ENCODE measurements at regions of chr4 and their contacts with region 1.

Region 1: DNA sequence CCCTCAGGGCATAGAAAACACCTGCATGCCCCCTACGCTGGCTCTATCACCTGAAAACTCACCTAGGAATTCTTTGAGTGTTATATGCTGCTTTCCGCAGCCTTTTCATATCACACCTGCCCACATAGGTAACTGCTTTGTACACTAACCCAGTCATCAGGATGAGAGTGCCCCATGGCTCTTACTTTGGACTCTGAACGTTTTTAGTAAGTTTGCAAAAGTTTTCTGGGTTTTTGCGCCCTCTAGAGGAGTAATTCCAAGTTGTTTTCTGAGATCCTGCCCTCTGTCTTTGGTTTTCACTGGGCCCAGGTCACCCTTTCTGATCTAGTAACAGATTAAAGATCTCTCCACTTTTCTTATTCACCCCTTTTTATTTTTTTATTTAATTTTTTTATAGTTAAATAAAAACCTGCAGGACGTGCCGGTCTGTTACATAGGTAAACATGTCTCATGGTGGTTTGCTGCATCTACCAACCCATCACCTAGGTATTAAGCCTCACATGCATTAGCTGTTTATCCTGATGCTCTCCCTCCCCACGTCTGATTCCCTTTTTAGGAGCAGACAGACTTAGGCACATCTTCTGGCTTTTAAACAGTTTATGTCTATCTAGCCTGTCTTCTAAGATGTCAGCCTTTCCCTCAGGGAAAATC is 139.2 kb downstream of the NWD2 start:
- DNase-seq: peak; percentile 27
- H3K4me3 Mint-ChIP-seq: no peak overlapping the region
- H3K27ac Mint-ChIP-seq: no peak overlapping the region
- H3K4me1 Mint-ChIP-seq: no peaks in the 10 kb centered on the region
- H3K27me3 Mint-ChIP-seq: peaks cover 5% of the 10 kb centered on the region

Region 2: DNA sequence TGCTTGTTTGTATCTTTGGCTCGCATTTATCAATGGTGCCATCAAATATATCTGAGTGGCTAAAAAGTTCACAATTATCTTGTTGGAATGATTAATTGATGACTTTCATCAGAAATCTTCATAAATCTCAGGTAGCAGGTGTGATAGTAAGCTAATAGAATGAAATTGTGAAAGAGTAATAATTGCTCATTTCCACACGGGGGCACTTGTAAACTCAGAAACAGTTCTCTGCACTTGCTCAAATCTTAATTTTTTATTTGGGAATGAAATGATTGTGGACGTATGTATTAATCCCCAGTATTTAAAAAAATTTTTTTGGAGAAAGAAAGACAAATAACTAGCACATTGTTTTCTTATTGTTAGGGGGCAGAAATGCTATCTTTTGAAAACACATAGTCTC is 969.5 kb before region 1 on chr4:
- CTCF ChIA-PET with region 1: interaction called, 3 read pairs
- intact Hi-C with region 1: loop called (anchors 1 kb)
- DNase-seq: no peak
- H3K4me3 Mint-ChIP-seq: no peak overlapping the region
- H3K27ac Mint-ChIP-seq: no peak overlapping the region
- H3K4me1 Mint-ChIP-seq: no peaks in the 10 kb centered on the region
- H3K27me3 Mint-ChIP-seq: peaks cover 22% of the 10 kb centered on the region

Measured in activated naive CD4-positive, alpha-beta T cell treated with anti-CD3 and anti-CD28 coated beads for 36 hours (primary cell).